Activated CD4-positive, alpha-beta T cell treated with anti-CD3 and anti-CD28 coated beads for 36 hours (primary cell): ENCODE measurements at regions of chr11 and their contacts with region 1.

Region 1: GRCh38 chr11:33065445-33066178 is 26.2 kb downstream of the TCP11L1 start:
- DNase-seq: peak; percentile 87
- ATAC-seq: peak; percentile 76
- H3K4me3 Mint-ChIP-seq: no peak overlapping the region
- H3K27ac Mint-ChIP-seq: no peak overlapping the region
- H3K4me1 Mint-ChIP-seq: peaks cover 45% of the 10 kb centered on the region
- H3K27me3 Mint-ChIP-seq: no peaks in the 10 kb centered on the region

Region 2: DNA sequence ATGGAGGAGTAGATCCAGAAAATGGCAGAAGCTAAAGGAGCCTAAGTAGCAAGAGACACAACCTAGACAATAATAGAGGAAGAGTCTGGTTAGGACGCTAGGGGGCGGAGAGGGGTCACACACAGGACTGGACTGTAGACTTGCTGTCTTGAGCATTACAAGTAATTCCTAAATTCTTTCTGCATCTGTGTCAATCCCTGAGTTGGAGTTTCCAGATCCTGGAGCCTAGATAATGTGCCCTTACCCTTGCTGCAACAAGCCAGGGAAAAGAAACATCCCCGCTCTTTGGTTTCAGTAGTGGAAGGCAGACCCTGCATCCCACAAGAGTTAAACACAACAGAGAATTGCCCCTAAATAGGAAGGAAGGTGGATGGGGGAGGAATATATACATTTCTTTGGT is 256.3 kb before region 1 on chr11:
- CTCF ChIA-PET with region 1: interaction called, 10 read pairs
- POLR2A ChIA-PET with region 1: no interaction called
- intact Hi-C with region 1: loop called (anchors 1 kb)
- DNase-seq: peak; percentile 83
- ATAC-seq: peak; percentile 94
- H3K4me3 Mint-ChIP-seq: no peak overlapping the region
- H3K27ac Mint-ChIP-seq: no peak overlapping the region
- H3K4me1 Mint-ChIP-seq: no peaks in the 10 kb centered on the region
- H3K27me3 Mint-ChIP-seq: no peaks in the 10 kb centered on the region

Region 3: DNA sequence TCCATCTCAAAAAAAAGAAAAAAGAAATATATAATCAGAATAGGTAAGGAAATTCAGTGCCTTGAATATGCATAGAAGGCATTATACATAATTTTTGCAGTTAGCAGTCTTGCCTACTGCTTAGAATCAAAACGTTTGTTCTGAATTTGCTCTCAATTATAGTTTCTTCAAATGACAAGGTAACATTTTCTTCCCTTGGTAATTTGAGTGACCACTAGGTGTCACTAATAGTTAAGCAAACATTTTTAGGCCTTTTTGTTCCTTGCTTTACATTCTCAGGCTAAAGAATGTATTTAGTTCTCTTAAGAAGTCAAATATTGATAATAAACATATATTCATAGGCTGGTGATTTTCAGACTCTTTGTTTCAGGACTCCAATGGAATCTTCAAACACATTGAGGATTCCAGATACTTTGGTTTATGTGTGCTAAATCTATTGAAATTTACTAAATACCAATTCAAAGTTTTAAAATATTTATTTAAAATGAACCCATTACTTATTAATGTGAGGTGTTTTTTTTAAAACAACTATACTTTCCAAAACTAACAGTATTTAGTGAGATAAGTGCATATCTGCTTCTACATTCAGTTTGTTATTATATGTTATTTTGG is 105.0 kb before region 1 on chr11:
- CTCF ChIA-PET with region 1: interaction called, 96 read pairs
- POLR2A ChIA-PET with region 1: interaction called, 3 read pairs
- intact Hi-C with region 1: loop called (anchors 1 kb)
- DNase-seq: no peak
- ATAC-seq: peak; percentile 36
- H3K4me3 Mint-ChIP-seq: no peak overlapping the region
- H3K27ac Mint-ChIP-seq: no peak overlapping the region
- H3K4me1 Mint-ChIP-seq: peaks cover 11% of the 10 kb centered on the region
- H3K27me3 Mint-ChIP-seq: no peaks in the 10 kb centered on the region

Region 4: GRCh38 chr11:33015621-33016551 is 49.7 kb before region 1 on chr11 and contains the start of gene DEPDC7:
- CTCF ChIA-PET with region 1: interaction called, 9 read pairs
- POLR2A ChIA-PET with region 1: interaction called, 3 read pairs
- intact Hi-C with region 1: loop called (anchors 1 kb)
- DNase-seq: peak; percentile 90
- ATAC-seq: peak; percentile 81
- H3K4me3 Mint-ChIP-seq: peak within 1 kb of the TSS; percentile 75
- H3K27ac Mint-ChIP-seq: peak within 1 kb of the TSS; percentile 37
- H3K4me1 Mint-ChIP-seq: peaks cover 43% of the 10 kb centered on the region
- H3K27me3 Mint-ChIP-seq: peaks cover 29% of the 10 kb centered on the region
- total RNA-seq, gene DEPDC7: 2.0 to 2.3 TPM

Region 5: GRCh38 chr11:33039274-33040032 is 26.2 kb before region 1 on chr11 and contains the start of gene TCP11L1:
- CTCF ChIA-PET with region 1: interaction called, 10 read pairs
- POLR2A ChIA-PET with region 1: interaction called, 7 read pairs
- intact Hi-C with region 1: loop called (anchors 1 kb)
- DNase-seq: peak; percentile 89
- ATAC-seq: peak; percentile 71
- H3K4me3 Mint-ChIP-seq: peak within 1 kb of the TSS; percentile 87
- H3K27ac Mint-ChIP-seq: peak within 1 kb of the TSS; percentile 95
- H3K4me1 Mint-ChIP-seq: peaks cover 37% of the 10 kb centered on the region
- H3K27me3 Mint-ChIP-seq: peaks cover 5% of the 10 kb centered on the region
- total RNA-seq, gene TCP11L1: 7.9 to 8.8 TPM

Region 6: DNA sequence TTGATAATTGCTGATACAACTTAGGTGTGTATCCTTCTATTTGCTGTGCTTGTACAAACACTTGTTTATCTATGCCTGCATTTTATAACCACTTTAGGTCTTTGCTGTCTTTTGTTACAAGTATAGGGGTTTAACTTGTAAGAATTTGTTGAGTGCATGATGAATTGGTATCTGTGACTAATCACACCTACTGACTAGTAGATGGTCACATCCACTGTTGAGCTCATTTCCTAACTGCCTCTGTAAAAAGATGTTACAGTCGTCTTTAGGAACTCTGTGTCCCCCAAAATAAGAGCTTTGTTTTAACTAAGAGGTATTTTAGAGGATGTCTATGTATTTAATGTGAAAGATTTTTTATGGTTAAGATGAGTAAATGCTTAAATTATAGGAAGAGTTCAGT is 252.1 kb after region 1 on chr11:
- CTCF ChIA-PET with region 1: no interaction called
- POLR2A ChIA-PET with region 1: no interaction called
- intact Hi-C with region 1: no loop called
- DNase-seq: no peak
- ATAC-seq: peak; percentile 77
- H3K4me3 Mint-ChIP-seq: no peak overlapping the region
- H3K27ac Mint-ChIP-seq: peak overlapping the region; percentile 44
- H3K4me1 Mint-ChIP-seq: peaks cover 21% of the 10 kb centered on the region
- H3K27me3 Mint-ChIP-seq: no peaks in the 10 kb centered on the region